PC-3 (cell line): ENCODE measurements at regions of chr12 and their contacts with region 1.

Region 1: DNA sequence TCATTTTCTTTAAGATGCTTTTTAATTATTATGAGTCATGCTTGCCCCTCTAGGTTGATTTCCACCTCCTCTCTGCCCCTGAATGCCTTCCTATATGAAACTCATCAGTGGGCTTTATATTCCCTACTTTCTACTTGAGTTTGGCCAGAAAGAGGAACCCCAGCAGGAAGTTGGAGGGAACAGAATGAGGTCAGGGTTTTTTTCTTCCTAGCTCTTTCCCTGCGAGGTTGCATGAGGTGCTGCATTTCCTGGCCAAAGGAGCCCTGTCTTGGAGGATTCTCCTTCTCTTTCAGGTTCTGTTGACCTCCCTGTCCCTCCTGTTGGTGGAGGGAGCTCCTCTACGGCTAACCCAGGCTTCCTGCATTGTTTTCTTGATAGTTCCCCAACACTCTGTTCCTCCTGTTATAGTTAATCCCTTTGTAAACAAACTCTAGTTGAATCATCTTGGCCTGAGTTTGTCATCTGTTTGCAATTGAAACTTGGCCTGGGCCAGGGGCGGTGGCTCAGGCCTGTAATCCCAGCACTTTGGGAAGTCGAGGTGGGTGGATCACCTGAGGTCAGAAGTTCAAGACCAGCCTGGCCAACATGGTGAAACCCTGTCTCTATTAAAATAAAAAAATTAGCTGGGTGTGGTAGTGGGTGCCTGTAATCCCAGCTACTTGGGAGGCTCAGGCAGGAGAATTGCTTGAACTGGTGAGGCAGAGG is 15.3 kb upstream of the SPIC start:
- DNase-seq: peak; percentile 94
- ATAC-seq: peak; percentile 100
- H3K4me3 ChIP-seq: no peak overlapping the region
- H3K27ac ChIP-seq: peak overlapping the region; percentile 43
- H3K4me1 ChIP-seq: peaks cover 10% of the 10 kb centered on the region
- H3K27me3 ChIP-seq: no peaks in the 10 kb centered on the region
- CTCF ChIP-seq: no peak

Region 2: GRCh38 chr12:101552277-101552676 is 92.5 kb after region 1 on chr12:
- CTCF ChIA-PET with region 1: no interaction called
- POLR2A ChIA-PET with region 1: no interaction called
- intact Hi-C with region 1: no loop called
- DNase-seq: peak; percentile 20
- ATAC-seq: no peak
- H3K4me3 ChIP-seq: no peak overlapping the region
- H3K27ac ChIP-seq: no peak overlapping the region
- H3K4me1 ChIP-seq: no peaks in the 10 kb centered on the region
- H3K27me3 ChIP-seq: peaks cover 29% of the 10 kb centered on the region; the same call in 1 of the 2 replicates
- CTCF ChIP-seq: no peak

Region 3: GRCh38 chr12:101607902-101608742 is 148.3 kb after region 1 on chr12:
- CTCF ChIA-PET with region 1: no interaction called
- POLR2A ChIA-PET with region 1: interaction called, 10 read pairs
- intact Hi-C with region 1: no loop called
- DNase-seq: peak; percentile 75
- ATAC-seq: no peak
- H3K4me3 ChIP-seq: peak overlapping the region; percentile 16; the same call in 1 of the 2 replicates
- H3K27ac ChIP-seq: no peak overlapping the region
- H3K4me1 ChIP-seq: peaks cover 22% of the 10 kb centered on the region
- H3K27me3 ChIP-seq: peaks cover 19% of the 10 kb centered on the region; the same call in 1 of the 2 replicates
- CTCF ChIP-seq: no peak